Activated T-helper 1 cell treated with anti-CD3 and anti-CD28 coated beads, Interleukin-12 subunit alpha, Interleukin-12 subunit beta, Interleukin-2, Interleukin-4 antibody, amounts not matched to agents 30 ng/mL and 10 ng/mL and 1 ng/mL, durations not matched to agents 14 hours and 24 hours and 36 hours (primary cell): ENCODE measurements at regions of chr1 and their contacts with region 1.

Region 1: DNA sequence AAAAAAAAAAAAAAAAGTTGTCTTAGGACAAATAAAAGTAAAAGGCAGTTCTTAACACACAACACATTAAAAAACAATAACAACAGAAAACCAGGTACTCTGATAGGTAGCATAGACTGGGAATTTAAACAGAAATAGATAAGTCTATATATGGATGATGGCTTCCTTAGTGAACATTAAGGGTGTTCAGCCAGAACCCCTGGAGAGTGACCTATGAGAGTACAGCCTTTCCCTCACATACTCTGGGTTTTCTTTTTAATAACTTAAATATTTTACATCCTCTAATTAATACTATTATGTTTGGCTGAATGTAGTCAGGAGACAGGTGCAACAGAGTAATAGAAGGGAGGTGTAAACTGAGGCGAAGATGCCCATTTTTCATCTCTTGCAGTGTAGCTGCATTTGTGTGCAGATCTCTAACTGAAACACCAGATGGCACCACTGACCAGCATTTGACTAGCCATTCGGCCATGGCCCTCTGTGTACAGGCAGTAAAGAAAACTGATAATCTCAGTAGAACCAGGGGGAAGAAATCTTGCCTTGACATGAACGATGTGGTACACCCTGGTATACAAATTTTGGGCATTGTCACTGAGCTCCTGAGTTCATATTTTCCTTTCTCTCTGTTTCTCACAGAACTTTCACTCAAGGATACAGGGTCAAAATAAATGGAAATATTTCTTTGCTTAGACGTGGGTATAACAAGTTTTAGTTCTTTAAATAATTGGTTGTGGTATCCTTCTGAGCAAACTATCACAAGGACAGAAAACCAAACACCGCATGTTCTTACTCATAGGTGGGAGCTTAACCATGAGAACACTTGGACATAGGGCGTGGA is 7.6 kb downstream of the TTF2 start:
- DNase-seq: peak; percentile 15
- H3K4me3 Mint-ChIP-seq: no peak overlapping the region
- H3K27ac Mint-ChIP-seq: no peak overlapping the region
- H3K4me1 Mint-ChIP-seq: peaks cover 57% of the 10 kb centered on the region
- H3K27me3 Mint-ChIP-seq: peaks cover 2% of the 10 kb centered on the region

Region 2: DNA sequence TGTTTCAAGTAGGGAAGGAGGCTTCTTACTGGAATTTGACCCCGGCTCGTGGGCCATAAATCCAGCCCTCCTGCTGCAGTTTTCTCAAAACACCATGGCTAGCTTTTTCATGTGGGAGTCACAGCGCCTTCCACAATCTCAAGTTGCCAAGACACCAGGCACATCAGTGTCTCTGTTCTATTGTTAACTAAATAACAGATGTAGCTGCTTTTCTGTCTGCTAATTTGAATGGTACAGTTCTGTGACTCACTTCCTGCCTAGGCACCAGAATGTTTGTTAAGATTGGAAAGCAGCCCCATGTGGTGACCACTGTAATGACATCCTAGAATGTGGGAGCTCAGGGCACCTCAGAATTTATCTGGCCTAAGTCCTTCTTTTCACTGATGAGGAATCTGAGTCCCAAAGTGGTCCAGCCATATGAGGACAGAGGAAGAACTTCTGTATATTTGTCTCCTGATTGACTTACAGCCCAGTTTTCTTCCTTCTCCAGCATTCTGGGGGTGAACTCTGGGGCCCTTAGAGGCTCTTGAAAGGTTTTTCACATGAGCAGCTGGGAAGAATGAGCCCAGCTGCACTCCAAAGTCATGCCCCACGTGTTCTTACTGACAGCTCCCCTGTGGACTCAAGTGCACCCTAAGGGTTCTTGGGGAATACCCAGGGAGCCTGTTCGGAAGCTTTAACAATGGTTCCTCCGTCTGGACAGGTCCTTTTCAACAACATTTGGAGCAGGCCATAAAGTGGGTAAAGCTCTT is 26.3 kb after region 1 on chr1:
- intact Hi-C with region 1: loop called (anchors 1 kb)
- DNase-seq: peak; percentile 34
- H3K4me3 Mint-ChIP-seq: no peak overlapping the region
- H3K27ac Mint-ChIP-seq: peak overlapping the region; percentile 58
- H3K4me1 Mint-ChIP-seq: peaks cover 23% of the 10 kb centered on the region
- H3K27me3 Mint-ChIP-seq: no peaks in the 10 kb centered on the region

Region 3: DNA sequence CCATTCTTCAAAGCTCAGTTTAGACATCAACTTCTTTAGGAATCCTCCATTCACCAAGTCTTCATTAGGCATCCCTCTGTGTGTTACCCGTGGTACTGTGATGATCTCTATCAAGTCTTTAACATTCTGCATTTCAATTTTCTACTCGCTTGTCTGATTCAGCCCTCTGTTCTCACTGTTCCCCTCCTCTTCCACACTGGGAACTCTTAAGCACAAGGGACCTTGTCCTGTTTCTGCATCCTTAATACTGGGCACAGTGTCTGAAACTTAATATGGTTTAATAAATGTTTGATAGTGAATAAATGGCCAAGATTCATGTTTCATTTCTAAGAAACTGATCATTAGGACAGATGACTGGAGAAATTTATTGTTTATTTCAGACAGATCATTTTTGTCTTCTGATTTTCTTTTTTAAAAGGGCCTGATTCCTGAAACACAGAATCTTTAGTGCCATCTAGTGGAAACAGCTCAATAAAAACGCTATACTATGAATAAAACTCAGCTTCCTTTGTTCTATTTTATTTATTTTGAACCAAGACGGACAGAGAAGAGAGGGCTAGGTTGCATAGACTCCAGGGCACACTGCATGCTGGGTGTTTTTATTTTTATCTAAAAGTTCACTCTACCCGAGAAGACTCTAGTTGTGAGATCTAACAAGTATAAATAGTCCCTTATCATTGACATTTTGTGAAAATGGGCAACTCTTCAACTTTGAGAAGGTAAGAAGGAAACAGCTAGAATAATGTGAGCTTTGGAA is 60.7 kb after region 1 on chr1:
- intact Hi-C with region 1: loop called (anchors 1 kb)
- DNase-seq: no peak
- H3K4me3 Mint-ChIP-seq: no peak overlapping the region
- H3K27ac Mint-ChIP-seq: no peak overlapping the region
- H3K4me1 Mint-ChIP-seq: no peaks in the 10 kb centered on the region
- H3K27me3 Mint-ChIP-seq: peaks cover 17% of the 10 kb centered on the region

Region 4: GRCh38 chr1:117146570-117147346 is 79.0 kb after region 1 on chr1:
- intact Hi-C with region 1: no loop called
- DNase-seq: no peak
- H3K4me3 Mint-ChIP-seq: no peak overlapping the region
- H3K27ac Mint-ChIP-seq: no peak overlapping the region
- H3K4me1 Mint-ChIP-seq: no peaks in the 10 kb centered on the region
- H3K27me3 Mint-ChIP-seq: peaks cover 11% of the 10 kb centered on the region